ENCODE measurements at regions of chr15 and their contacts with region 1.

Region 1: GRCh38 chr15:55196458-55197361 is at the start of gene RSL24D1:
- H3K4me3 Mint-ChIP-seq: no peak within 1 kb of the TSS
- H3K27ac Mint-ChIP-seq: no peak within 1 kb of the TSS
- H3K4me1 Mint-ChIP-seq: peaks cover 5% of the 10 kb centered on the region
- H3K27me3 Mint-ChIP-seq: no peaks in the 10 kb centered on the region

Region 2: DNA sequence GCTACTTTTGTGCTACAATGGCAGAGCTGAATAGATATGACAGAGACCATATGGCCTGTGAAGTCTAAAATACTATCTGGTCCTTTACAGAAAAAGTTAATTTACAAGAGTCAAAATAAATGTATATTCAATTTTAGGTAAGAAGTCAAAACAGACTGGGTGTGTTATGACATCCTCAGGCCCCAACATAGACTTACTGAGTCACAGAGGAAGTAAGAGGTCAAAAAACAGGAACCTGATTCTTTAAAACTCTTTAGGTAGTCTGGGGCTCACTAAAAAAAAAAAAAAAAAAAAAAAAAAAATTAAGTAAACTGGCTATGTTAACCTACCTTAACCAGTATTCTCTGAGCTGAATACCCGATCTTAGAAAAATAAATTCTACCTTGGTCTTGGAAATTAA is 298.2 kb after region 1 on chr15:
- intact Hi-C with region 1: loop called (anchors 5 kb)
- H3K4me3 Mint-ChIP-seq: no peak overlapping the region
- H3K27ac Mint-ChIP-seq: no peak overlapping the region
- H3K4me1 Mint-ChIP-seq: peaks cover 16% of the 10 kb centered on the region
- H3K27me3 Mint-ChIP-seq: no peaks in the 10 kb centered on the region